ENCODE measurements at regions of chr18 and their contacts with region 1.

Region 1: GRCh38 chr18:54983041-54983686 is 23.9 kb upstream of the CCDC68 start:
- ATAC-seq: peak in 4 of 8 experiments; percentile 45 to 90 (median 79)
- H3K4me3 ChIP-seq: no peak overlapping the region
- H3K27ac ChIP-seq: no peak overlapping the region
- H3K4me1 ChIP-seq: no peaks in the 10 kb centered on the region

Region 2: DNA sequence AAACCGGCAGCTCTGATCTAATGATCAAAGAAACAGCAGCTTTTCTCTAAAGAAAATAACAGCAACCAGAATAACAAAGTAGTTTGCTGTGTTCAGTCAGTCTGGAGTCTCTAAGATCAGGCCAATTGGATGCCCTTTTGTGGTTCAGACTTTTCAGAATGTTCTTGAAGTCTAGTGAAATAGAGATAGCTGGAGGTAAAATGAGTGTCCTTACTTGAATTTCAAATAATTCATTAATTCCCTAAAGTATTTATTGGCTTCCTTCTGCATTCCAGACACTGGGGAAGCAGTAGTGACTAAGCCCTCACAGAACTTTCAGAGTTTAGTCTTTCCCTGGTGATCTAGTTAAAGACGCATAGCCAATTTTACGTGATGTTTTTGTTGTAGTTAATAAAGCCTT is 566.7 kb before region 1 on chr18:
- in situ Hi-C with region 1: loop called in 1 of 9 experiments (anchors 25 kb)
- ATAC-seq: peak in 2 of 8 experiments; percentile 43 to 73
- H3K4me3 ChIP-seq: no peak overlapping the region
- H3K27ac ChIP-seq: no peak overlapping the region
- H3K4me1 ChIP-seq: no peaks in the 10 kb centered on the region

Region 3: GRCh38 chr18:54444319-54444914 is 538.7 kb before region 1 on chr18:
- in situ Hi-C with region 1: loop called in 1 of 9 experiments (anchors 25 kb)
- ATAC-seq: peak; percentile 41 to 93 (median 66)
- H3K4me3 ChIP-seq: no peak overlapping the region
- H3K27ac ChIP-seq: no peak overlapping the region
- H3K4me1 ChIP-seq: no peaks in the 10 kb centered on the region

Region 4: GRCh38 chr18:54679318-54680149 is 303.6 kb before region 1 on chr18:
- in situ Hi-C with region 1: loop called in 8 of 9 experiments (anchors 5 to 25 kb)
- ATAC-seq: peak in 6 of 8 experiments; percentile 53 to 93 (median 82)
- H3K4me3 ChIP-seq: no peak overlapping the region
- H3K27ac ChIP-seq: no peak overlapping the region
- H3K4me1 ChIP-seq: peaks cover 5 to 7% of the 10 kb centered on the region in 2 donors